ENCODE measurements at regions of chr3 and their contacts with region 1.

Region 1: GRCh38 chr3:151011427-151011826 is 38.9 kb upstream of the CLRN1 start:
- DNase-seq: peak; percentile 71
- H3K4me3 ChIP-seq: no peak overlapping the region
- CTCF ChIP-seq: no peak

Region 2: GRCh38 chr3:150925751-150926201 is 85.7 kb before region 1 on chr3:
- in situ Hi-C with region 1: no loop called
- DNase-seq: peak; percentile 16
- H3K4me3 ChIP-seq: no peak overlapping the region
- CTCF ChIP-seq: peak; percentile 74

Region 3: DNA sequence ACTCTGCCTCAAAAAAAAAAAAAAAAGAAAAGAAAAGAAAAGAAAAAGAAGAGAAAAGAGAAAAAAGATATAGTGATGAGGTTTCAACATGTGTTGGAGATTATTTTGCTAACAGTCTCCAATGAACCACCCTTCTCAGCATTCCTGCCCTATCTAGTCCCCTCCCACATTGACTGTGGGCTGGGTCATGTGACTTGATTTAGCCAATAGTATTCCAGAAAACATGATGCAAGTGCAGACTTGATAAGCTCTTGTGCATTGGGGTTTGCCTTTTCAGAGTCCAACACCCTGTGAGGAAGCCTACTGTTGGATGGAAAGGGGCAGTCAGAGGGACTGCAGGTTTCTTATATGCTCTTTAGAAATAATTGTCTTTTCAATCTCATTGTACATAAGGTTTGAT is 36.2 kb after region 1 on chr3:
- in situ Hi-C with region 1: no loop called
- DNase-seq: no peak
- H3K4me3 ChIP-seq: no peak overlapping the region
- CTCF ChIP-seq: no peak

Region 4: DNA sequence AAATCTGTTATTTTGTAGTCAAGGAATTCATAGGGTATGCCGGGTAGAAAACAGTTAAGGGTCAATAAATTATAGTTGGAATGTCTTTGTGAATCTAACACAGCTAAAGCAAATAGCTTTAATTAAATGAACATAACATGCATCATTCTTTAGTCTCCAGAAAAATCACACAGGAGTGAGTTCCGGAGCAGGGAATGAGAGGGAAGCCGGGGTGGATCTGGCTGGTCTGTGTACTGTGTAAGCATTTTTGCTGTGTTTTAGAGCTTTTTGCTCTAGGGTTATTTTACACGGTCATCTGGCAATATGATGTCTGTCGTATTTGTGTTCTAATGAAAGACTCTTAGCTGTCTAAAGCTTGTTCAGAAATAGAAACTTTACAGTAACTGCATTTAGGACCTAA is 131.5 kb after region 1 on chr3:
- in situ Hi-C with region 1: loop called (anchors 5 kb)
- DNase-seq: no peak
- H3K4me3 ChIP-seq: no peak overlapping the region
- CTCF ChIP-seq: no peak

Measured in astrocyte of the cerebellum (primary cell).